ENCODE measurements at regions of chr10 and their contacts with region 1.

Region 1: GRCh38 chr10:100739516-100740368 is 5.6 kb upstream of the PAX2 start:
- DNase-seq: no peak
- H3K4me3 ChIP-seq: peak overlapping the region in 1 of 3 donors; percentile 7
- H3K27ac ChIP-seq: no peak overlapping the region
- H3K4me1 ChIP-seq: peaks cover 3 to 7% of the 10 kb centered on the region in 2 donors
- H3K27me3 ChIP-seq: peaks cover 8 to 100% of the 10 kb centered on the region in 2 donors
- CTCF ChIP-seq: no peak
- POLR2A ChIP-seq: no peak

Region 2: DNA sequence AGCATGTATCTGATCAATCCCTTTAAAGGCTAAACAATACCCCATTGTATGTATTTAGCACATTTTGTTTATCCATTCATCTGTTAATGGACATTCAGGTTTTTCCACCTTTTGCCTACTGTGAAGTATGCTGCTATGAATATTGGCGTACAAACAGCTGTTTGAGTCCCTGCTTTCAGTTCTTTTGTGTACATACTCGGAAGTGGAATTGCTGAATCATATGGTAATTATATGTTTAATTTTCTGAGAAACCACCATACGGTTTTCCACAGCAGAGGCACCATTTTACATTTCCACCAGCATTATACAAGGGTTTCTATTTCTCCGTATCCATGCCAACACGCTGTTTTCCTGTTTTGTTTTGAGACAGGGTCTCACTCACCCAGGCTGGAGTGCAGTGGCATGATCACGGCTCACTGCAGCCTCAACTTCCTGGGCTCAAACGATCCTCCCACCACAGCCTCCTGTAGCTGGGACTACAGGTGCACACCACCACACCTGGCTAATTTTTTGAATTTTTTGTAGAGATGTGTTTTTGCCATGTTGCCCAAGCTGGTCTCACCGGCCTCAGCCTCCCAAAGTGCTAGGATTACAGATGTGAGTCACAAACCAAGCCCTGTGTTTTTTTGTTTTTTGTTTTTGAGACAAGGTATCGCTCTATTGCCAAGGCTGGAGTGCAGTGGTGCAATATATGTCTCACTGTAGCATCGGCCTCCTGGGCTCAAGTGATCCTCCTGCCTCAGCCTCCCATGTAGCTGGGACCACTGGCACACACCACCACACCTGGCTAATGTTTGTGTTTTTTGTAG is 977.3 kb after region 1 on chr10:
- intact Hi-C with region 1: loop called (anchors 5 kb)
- DNase-seq: no peak
- H3K4me3 ChIP-seq: no peak overlapping the region
- H3K27ac ChIP-seq: peak overlapping the region; percentile 32 to 66
- H3K4me1 ChIP-seq: peaks cover 0 to 3% of the 10 kb centered on the region in 2 donors
- H3K27me3 ChIP-seq: no peaks in the 10 kb centered on the region
- CTCF ChIP-seq: no peak
- POLR2A ChIP-seq: no peak